ENCODE measurements at regions of chr17 and their contacts with region 1.

Region 1: DNA sequence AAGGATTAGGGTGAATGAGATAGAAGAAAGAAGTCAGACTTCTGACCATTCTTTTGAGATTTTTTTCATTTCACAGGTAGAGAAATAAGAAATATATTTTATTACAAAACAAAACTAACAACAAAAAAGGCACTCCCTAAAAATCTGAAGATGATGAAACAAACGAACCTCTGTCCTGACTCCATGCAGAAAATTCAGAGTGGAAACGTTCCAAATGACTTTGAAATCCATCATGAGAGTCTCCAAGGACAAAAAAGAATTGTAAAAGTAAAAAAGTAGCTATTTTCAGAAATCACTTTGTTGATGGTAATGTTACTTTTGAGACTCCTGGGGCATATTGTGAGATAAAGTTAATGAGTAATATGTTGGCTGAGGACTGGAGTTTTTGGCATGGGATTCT is 26.4 kb upstream of the MNT start:
- DNase-seq: no peak
- ATAC-seq: no peak
- H3K4me3 ChIP-seq: no peak overlapping the region
- H3K27ac ChIP-seq: no peak overlapping the region
- H3K4me1 ChIP-seq: peaks cover 3 to 10% of the 10 kb centered on the region in 2 donors
- H3K27me3 ChIP-seq: no peaks in the 10 kb centered on the region
- CTCF ChIP-seq: no peak
- POLR2A ChIP-seq: no peak

Region 2: DNA sequence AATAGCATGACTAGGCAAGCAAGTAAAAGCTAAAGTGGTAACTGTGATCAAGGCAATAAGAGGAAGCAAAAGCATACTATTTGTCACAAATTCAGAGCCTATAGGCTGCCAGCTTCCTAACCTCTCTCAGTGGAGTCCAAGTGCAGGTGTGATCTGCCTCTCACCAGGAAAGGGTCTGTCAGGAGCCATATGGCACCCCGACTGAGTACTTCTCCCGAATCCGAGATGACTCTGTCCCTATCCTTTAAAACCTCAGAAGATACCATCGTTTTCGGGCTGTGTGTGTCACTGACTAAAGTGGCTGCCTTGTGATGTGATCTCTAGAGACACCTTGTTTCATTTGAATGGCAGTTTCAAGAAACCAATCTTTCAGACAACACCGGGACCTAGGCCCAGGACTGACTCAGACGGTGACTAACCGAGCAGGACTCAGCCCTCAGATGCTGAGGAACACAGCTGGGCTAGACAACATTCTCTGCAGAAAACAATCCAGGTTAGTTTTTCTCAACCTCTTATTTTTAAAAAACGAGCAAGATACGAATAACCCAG is 187.3 kb before region 1 on chr17:
- in situ Hi-C with region 1: no loop called
- intact Hi-C with region 1: no loop called
- DNase-seq: peak; percentile 83
- ATAC-seq: peak; percentile 54 to 68
- H3K4me3 ChIP-seq: peak overlapping the region in 1 of 4 donors; percentile 12
- H3K27ac ChIP-seq: peak overlapping the region; percentile 94 to 97 (median 95)
- H3K4me1 ChIP-seq: peaks cover 66 to 70% of the 10 kb centered on the region in 2 donors
- H3K27me3 ChIP-seq: no peaks in the 10 kb centered on the region
- CTCF ChIP-seq: no peak
- POLR2A ChIP-seq: peak in 1 of 2 donors; percentile 60

Region 3: DNA sequence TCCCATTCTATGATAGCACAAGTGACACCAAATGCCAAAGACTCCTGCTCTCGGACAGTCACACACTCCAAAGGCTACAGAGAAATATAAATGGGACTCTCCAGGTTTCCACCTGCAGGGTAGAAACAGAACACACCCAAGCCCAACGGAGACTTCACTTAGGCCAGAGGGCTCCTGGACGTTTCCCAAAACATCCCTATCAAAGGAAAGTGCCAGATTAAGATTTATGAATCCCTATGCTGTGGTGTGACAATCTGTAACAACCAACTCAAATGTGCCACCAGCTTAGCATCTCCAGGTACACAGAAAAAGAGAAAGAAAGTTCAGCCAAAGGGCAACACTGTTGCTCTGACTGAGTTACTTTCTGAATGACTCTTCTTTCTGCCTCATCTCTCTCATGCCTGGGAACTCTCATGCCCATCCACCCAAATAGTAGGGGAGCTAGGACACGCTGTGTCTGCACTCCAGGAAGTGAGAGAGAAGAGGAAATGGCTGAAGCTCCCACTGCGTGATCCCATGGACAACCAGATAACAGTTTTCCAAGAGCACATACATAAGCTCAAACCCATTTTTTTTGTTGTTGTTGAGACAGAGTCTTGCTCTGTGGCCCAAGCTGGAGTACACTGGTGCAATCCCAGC is 173.3 kb before region 1 on chr17:
- in situ Hi-C with region 1: no loop called
- intact Hi-C with region 1: no loop called
- DNase-seq: no peak
- ATAC-seq: no peak
- H3K4me3 ChIP-seq: no peak overlapping the region
- H3K27ac ChIP-seq: no peak overlapping the region
- H3K4me1 ChIP-seq: peaks cover 0 to 7% of the 10 kb centered on the region in 2 donors
- H3K27me3 ChIP-seq: no peaks in the 10 kb centered on the region
- CTCF ChIP-seq: no peak
- POLR2A ChIP-seq: no peak

Region 4: DNA sequence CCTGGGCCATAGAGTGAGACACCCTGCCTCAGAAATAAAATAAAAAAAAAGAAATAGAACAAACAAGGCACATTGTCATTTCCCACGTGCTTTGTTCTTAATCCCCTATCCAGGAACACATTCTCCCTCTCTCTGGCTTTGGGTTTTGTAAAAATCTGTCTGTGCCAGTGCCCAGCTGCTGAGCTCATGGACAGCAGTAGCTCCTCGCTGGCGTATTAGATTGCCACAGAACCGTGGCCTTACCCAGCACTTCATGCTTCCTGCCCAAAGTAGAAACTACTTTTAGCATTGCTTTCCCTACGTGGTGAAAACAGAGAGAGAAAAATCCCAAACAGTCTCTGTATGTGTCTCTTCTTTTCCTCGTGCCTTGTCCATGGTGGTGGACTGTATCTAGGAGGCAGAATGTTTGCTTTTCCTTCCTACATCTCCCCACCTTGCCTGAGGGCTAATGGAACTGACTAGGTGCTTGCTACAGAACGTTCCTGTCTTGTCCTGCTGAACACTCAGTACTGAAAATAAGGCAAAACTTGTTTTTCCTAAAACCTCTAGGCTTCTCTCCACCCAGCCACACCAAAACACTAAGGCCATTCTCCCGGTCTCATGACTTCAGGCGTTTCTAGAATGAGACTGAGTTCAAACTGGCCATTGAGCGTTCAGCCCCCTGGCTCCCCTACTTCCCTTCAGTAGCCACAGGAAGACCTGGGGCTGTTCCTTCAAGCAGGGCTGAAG is 52.5 kb before region 1 on chr17:
- in situ Hi-C with region 1: loop called in 1 of 4 experiments (anchors 5 kb)
- intact Hi-C with region 1: no loop called
- DNase-seq: no peak
- ATAC-seq: peak in 1 of 2 donors; percentile 56
- H3K4me3 ChIP-seq: no peak overlapping the region
- H3K27ac ChIP-seq: peak overlapping the region in 1 of 4 donors; percentile 57
- H3K4me1 ChIP-seq: peaks cover 0 to 5% of the 10 kb centered on the region in 2 donors
- H3K27me3 ChIP-seq: no peaks in the 10 kb centered on the region
- CTCF ChIP-seq: no peak
- POLR2A ChIP-seq: no peak

Measured in gastrocnemius medialis (tissue), 4 donors.